Activated CD4-positive, alpha-beta T cell treated with anti-CD3 and anti-CD28 coated beads for 36 hours (primary cell): ENCODE measurements at regions of chr1 and their contacts with region 1.

Region 1: DNA sequence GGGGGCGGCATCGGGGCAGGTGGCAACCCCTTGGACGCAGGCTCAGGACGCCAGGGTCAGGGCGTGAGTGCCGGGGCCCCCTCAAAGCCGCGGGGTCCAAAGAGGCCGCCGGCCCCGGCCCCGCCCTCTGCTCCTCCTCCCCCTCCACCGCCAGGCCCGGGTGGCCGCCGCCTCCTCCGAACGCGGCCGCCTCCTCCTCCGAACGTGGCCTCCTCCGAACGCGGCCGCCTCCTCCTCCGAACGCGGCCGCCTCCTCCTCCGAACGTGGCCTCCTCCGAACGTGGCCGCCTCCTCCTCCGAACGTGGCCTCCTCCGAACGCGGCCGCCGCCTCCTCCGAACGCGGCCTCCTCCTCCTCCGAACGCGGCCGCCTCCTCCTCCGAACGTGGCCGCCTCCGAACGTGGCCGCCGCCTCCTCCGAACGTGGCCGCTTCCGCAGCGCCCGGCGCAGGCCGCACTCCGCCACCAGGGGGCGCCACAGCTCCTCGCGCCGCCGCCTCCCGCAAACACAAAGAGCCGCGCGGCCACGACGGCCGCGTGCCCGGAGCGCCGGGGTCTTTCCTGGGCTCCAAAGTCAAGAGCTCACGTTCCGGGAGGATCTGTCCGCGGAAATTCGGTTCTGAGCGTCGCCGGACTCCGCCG is 19.3 kb upstream of the SAMD11 start:
- DNase-seq: peak; percentile 91
- ATAC-seq: peak; percentile 90
- H3K4me3 Mint-ChIP-seq: peak overlapping the region; percentile 64
- H3K27ac Mint-ChIP-seq: no peak overlapping the region
- H3K4me1 Mint-ChIP-seq: peaks cover 7% of the 10 kb centered on the region
- H3K27me3 Mint-ChIP-seq: peaks cover 24% of the 10 kb centered on the region

Region 2: DNA sequence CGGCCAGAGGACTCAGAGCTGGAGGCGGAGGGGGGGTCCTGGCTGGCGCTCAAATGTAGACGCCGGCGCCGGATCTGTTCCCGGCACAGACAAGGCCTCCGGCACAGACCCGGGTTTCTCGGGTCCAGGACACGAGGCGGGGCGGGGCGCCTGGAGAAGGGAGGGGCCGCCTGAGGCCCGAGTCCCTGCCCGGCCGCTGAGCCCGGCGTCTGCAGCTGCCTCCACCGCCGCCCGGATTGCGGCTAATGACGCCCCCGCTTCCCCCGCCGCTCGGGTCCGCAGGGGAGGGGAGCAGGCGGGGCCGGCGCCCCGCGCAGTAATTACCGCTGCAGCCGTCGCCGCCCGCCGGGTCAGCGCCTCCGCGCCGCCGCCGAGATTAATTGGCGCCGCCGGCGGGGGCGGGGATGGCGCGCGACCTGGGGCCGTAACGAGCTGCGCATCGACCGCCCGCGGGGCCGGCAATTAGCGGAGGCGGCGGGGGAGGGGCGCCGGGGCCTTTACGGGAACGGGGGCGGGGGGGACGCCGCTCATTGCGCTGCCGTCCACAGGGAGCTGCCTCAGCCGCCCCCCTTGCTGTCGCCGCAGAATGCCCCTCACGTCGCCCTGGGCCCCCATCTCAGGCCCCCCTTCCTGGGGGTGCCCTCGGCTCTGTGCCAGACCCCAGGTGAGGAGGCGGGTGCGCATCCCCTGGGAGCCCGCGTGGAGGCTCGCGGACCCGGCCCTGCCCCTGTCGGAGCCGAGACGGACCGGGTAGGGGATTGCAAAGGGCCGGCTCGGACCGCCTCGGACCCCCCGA is 37.4 kb after region 1 on chr1:
- CTCF ChIA-PET with region 1: interaction called, 3 read pairs
- POLR2A ChIA-PET with region 1: interaction called, 4 read pairs
- intact Hi-C with region 1: loop called (anchors 2 to 5 kb)
- DNase-seq: peak; percentile 56
- ATAC-seq: peak; percentile 37
- H3K4me3 Mint-ChIP-seq: no peak overlapping the region
- H3K27ac Mint-ChIP-seq: no peak overlapping the region
- H3K4me1 Mint-ChIP-seq: peaks cover 5% of the 10 kb centered on the region
- H3K27me3 Mint-ChIP-seq: peaks cover 14% of the 10 kb centered on the region

Region 3: GRCh38 chr1:958823-959729 is 54.6 kb after region 1 on chr1 and contains the start of gene NOC2L:
- CTCF ChIA-PET with region 1: no interaction called
- POLR2A ChIA-PET with region 1: no interaction called
- intact Hi-C with region 1: loop called in 1 of 2 experiments (anchors 1 kb)
- DNase-seq: peak; percentile 98
- ATAC-seq: peak; percentile 86
- H3K4me3 Mint-ChIP-seq: peak within 1 kb of the TSS; percentile 82
- H3K27ac Mint-ChIP-seq: peak within 1 kb of the TSS; percentile 63
- H3K4me1 Mint-ChIP-seq: peaks cover 18% of the 10 kb centered on the region
- H3K27me3 Mint-ChIP-seq: no peaks in the 10 kb centered on the region
- total RNA-seq, gene NOC2L: 112 to 134 TPM

Region 4: DNA sequence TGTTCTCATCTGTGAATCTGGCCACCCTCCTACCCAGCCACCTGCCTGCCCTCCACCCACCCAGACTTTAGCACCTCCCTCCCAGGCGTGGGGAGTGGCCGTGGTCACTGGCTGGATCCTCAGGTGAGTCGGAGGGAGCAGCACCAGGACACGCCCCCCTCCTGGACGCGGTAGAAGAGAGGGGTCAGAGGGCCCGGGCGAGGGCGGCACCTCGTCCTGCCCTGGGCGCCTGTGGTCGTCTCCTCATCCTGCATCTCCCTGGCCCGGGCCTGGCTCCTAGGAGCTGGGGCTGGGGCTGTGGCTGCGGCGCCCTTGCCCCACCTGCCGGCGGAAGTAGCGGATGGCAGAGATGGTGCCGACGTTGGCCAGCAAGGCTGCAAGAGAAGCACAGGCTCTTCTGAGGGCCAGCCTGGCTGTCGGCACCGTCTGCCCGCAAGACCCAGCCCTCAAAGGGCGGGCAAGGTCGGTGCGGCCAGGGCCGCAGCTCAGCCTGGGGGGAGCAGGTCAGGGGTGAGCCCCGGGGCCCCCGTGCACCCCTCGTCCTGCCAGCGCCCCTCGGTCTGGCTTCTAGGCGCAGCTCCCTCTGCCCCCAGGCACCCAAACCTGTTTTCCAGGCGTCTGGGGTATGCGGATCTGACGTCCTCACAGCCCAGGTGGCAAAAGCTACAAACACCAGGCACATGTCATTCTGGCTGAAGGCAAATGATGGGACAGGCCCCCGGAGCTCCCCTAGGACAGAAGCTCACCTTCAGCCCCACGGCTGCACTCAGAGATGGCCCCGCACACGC is 71.7 kb after region 1 on chr1:
- CTCF ChIA-PET with region 1: interaction called, 10 read pairs
- POLR2A ChIA-PET with region 1: no interaction called
- intact Hi-C with region 1: loop called (anchors 1 kb)
- DNase-seq: peak; percentile 88
- ATAC-seq: peak; percentile 97
- H3K4me3 Mint-ChIP-seq: no peak overlapping the region
- H3K27ac Mint-ChIP-seq: no peak overlapping the region
- H3K4me1 Mint-ChIP-seq: peaks cover 6% of the 10 kb centered on the region
- H3K27me3 Mint-ChIP-seq: peaks cover 8% of the 10 kb centered on the region